Breast epithelium (tissue), 4 donors: ENCODE measurements at regions of chr9 and their contacts with region 1.

Region 1: GRCh38 chr9:97820373-97820772 is 32.7 kb upstream of the FOXE1 start:
- DNase-seq: no peak
- H3K4me3 ChIP-seq: no peak overlapping the region
- H3K27ac ChIP-seq: no peak overlapping the region
- H3K4me1 ChIP-seq: no peaks in the 10 kb centered on the region
- H3K27me3 ChIP-seq: peaks cover 0 to 9% of the 10 kb centered on the region in 2 donors
- CTCF ChIP-seq: no peak
- POLR2A ChIP-seq: no peak

Region 2: DNA sequence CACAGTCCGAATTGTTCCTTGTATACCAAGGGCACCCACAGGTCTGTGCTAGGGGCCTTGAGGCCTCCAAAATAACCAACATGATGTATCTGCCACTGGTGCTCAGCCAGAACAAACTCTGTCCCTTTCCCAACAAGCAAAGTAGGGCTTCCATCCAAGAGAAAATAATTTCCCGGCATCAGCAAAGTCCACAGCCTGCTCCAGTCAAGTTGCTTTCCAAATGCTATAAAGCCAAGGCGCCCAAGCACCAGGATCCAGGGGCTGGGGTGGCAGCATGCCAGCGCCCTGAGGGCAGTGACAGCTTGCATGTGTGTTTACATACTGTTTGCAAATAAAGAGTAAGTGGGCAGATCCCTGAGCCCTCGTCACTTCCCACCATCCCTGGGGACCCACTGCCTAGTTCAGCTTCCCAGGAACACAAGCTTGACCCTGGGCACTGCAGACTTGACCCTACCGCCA is 1789.0 kb before region 1 on chr9:
- intact Hi-C with region 1: no loop called
- DNase-seq: peak in 1 of 2 donors; percentile 75
- H3K4me3 ChIP-seq: no peak overlapping the region
- H3K27ac ChIP-seq: no peak overlapping the region
- H3K4me1 ChIP-seq: no peaks in the 10 kb centered on the region
- H3K27me3 ChIP-seq: peaks cover 0 to 7% of the 10 kb centered on the region in 2 donors
- CTCF ChIP-seq: no peak
- POLR2A ChIP-seq: no peak

Region 3: DNA sequence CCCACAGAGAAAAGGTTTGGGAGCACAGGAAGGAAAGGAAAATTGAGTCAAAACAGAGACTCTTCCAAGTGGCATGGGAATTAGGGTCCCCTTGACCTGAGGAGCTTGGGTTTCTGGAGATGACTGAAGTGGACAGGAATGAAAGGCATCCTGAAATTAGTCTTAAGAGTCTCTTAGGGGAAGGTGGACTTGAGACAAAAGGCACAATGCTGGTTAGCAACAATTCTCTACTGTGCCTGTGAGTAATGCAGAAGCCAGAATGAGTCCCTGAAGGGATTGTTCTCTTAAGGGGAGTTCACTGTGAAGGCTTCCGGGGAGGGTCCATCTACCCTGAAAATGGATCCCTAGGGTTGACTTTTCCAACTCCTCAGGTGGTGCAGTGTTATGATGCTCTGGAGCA is 25.7 kb before region 1 on chr9:
- intact Hi-C with region 1: no loop called
- DNase-seq: no peak
- H3K4me3 ChIP-seq: no peak overlapping the region
- H3K27ac ChIP-seq: no peak overlapping the region
- H3K4me1 ChIP-seq: no peaks in the 10 kb centered on the region
- H3K27me3 ChIP-seq: peaks cover 0 to 4% of the 10 kb centered on the region in 2 donors
- CTCF ChIP-seq: no peak
- POLR2A ChIP-seq: no peak

Region 4: GRCh38 chr9:97809666-97810344 is 10.6 kb before region 1 on chr9:
- intact Hi-C with region 1: loop called (anchors 1 kb)
- DNase-seq: no peak
- H3K4me3 ChIP-seq: no peak overlapping the region
- H3K27ac ChIP-seq: no peak overlapping the region
- H3K4me1 ChIP-seq: no peaks in the 10 kb centered on the region
- H3K27me3 ChIP-seq: no peaks in the 10 kb centered on the region
- CTCF ChIP-seq: no peak
- POLR2A ChIP-seq: no peak

Region 5: GRCh38 chr9:98523231-98523896 is 703.0 kb after region 1 on chr9:
- intact Hi-C with region 1: no loop called
- DNase-seq: no peak
- H3K4me3 ChIP-seq: no peak overlapping the region
- H3K27ac ChIP-seq: no peak overlapping the region
- H3K4me1 ChIP-seq: no peaks in the 10 kb centered on the region
- H3K27me3 ChIP-seq: peaks cover 0 to 2% of the 10 kb centered on the region in 2 donors
- CTCF ChIP-seq: no peak
- POLR2A ChIP-seq: no peak